Heart right ventricle (tissue), 16 donors: ENCODE measurements at regions of chr15 and their contacts with region 1.

Region 1: GRCh38 chr15:96160269-96160668 is 170.2 kb upstream of the NR2F2 start:
- DNase-seq: peak; percentile 48 to 53
- ATAC-seq: peak in 5 of 8 donors; percentile 14 to 53 (median 38)
- H3K4me3 ChIP-seq: peak overlapping the region in 1 of 10 donors; percentile 17
- H3K27ac ChIP-seq: peak overlapping the region in 5 of 10 donors; percentile 28 to 63 (median 39)
- H3K4me1 ChIP-seq: peaks cover 0 to 37% (median 11%) of the 10 kb centered on the region in 9 donors
- H3K27me3 ChIP-seq: no peaks in the 10 kb centered on the region
- CTCF ChIP-seq: no peak

Region 2: DNA sequence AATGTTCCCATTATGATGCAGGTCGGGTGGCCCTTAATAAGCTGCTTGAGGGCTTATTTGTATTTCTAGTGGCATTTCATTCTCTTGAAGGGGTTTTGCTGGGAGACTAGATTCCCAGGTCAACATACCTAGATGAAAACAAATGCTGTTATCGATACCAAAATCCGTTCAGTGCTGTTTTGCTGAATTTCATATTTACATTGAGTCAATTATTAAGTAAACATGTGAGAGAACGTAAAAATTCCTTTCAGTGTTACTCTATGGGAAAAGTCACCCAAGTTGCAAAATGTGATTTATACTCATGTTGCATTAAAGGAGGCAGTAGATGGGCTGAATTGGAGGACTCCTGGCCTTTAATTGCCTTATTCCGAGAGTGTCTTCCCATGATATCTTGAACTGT is 841.1 kb before region 1 on chr15:
- intact Hi-C with region 1: loop called in 1 of 10 experiments (anchors 10 kb)
- DNase-seq: no peak
- ATAC-seq: no peak
- H3K4me3 ChIP-seq: no peak overlapping the region
- H3K27ac ChIP-seq: no peak overlapping the region
- H3K4me1 ChIP-seq: peaks cover 0 to 8% (median 0%) of the 10 kb centered on the region in 9 donors
- H3K27me3 ChIP-seq: no peaks in the 10 kb centered on the region
- CTCF ChIP-seq: no peak

Region 3: DNA sequence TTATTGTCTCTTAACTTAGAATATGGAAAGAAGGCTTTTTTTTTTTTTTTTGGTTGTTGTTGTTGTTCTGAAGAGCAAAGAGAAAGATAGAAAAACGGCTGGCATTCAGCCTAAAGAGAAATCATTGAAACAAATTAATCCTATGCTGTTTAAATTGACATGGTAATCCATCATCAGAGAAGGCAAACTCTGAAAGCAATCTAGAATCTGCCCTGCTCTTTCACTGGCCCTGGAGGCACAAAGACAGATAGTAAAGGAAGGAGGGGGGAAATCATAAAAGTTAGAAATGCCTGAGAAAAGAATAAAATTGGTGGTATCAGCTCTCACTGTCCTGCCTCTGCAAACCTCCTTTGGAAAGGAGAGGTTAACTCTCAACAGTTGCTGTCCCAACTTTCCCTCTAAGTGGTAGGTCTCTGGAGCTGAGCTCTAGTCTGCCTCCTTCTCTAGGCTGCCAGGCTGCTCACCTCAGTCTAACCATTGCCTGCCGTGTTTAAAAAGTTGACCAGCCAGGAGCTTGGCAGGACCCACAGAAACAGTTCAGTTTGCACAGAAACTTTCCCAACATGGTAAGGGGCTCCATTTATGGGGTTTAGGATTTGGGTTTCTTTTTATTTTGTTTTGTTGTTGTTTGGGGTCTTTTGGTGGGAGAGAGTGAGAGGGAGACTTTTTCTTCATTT is 156.8 kb after region 1 on chr15:
- intact Hi-C with region 1: loop called in 1 of 10 experiments (anchors 5 kb)
- DNase-seq: no peak
- ATAC-seq: no peak
- H3K4me3 ChIP-seq: peak overlapping the region in 2 of 10 donors; percentile 3 to 18
- H3K27ac ChIP-seq: peak overlapping the region in 4 of 10 donors; percentile 4 to 30 (median 21)
- H3K4me1 ChIP-seq: peaks cover 0 to 18% (median 7%) of the 10 kb centered on the region in 9 donors
- H3K27me3 ChIP-seq: peaks cover 0 to 69% (median 50%) of the 10 kb centered on the region in 7 donors
- CTCF ChIP-seq: no peak